ENCODE measurements at regions of chr2 and their contacts with region 1.

Region 1: DNA sequence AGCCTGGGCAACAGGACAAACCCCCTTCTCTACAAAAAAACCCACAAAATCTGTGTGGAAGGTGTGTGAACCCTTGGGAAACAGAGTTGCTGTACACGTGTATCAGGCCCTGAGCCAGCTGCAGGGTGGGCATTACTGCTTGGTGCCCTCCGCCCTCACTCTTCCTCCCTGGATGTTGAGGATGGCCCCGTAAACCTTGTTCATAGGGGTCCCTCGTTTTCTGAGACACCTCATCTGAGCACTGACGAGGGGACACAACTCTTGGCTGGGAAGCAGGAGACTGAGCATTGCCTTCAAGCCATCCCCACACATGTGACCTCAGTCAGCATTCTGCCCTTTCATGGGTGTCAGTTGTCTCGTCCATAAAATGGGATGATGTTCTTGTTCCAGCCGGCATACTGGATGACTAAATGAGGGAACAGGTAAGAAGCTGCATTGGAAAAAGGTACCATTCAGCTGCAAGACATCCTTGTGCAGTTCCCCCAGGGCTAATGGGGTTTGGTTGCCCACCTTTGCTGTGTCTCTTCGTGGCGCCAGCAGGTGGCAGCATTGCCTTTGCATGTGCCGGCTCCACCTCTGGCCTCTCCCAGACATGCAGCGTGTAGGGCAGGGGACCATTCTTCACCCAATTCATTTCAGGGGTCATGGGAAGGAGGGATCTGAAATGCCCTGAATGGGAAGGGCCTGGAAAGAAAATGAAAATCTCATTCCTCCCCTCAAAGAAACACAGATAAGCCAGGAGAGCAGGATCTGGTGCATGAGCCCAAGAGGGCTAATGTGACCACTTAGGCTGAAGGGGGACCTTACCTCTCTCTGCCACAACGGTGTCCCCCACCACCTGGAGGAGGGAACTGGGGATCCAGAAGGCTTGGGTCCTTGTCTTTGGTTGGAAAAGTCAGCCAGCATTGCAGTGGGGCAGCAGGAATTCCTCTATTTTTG is 36.4 kb upstream of the HAAO start:
- DNase-seq: peak; percentile 76
- H3K4me3 ChIP-seq: no peak overlapping the region
- H3K27ac ChIP-seq: no peak overlapping the region
- H3K4me1 ChIP-seq: no peaks in the 10 kb centered on the region
- CTCF ChIP-seq: peak; percentile 94

Region 2: DNA sequence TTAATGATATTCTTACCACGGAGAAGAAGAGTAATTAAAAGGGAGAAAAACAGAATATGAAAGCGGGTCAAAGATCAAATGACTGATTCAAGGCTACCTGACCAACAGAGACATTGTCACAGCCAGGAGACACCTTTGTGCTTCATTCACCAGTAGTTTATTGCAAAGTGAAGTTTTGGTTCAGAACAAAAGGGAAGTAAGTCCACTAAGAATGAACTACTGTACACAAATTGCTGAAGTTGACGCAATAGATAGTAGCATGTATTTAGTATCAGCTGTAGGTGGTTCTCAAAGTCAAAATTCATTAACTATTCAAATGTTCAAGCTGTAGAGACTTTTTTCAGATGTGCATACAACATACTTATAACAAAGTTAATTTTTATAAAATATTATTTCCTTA is 403.1 kb before region 1 on chr2:
- CTCF ChIA-PET with region 1: no interaction called
- POLR2A ChIA-PET with region 1: no interaction called
- intact Hi-C with region 1: no loop called
- DNase-seq: no peak
- H3K4me3 ChIP-seq: no peak overlapping the region
- H3K27ac ChIP-seq: no peak overlapping the region
- H3K4me1 ChIP-seq: no peaks in the 10 kb centered on the region
- CTCF ChIP-seq: no peak

Region 3: DNA sequence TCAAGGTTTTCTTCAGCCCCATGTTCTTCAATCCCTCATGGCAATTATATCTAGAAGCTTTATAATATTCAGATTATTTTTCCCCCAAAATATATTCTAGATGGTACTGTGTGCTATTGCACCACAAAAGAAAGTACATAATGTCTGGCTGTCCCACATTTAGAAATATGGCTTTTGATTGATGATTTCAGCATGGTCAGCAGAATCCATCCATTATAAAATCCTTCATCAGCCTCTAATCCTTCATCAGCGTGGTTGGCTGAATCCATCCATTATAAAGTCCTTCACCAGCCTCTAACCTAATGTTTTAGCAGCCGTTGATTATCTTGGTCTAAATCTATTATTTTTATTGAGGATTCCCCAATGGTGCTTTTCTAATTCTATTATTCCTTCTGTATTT is 13.0 kb before region 1 on chr2:
- CTCF ChIA-PET with region 1: no interaction called
- POLR2A ChIA-PET with region 1: no interaction called
- intact Hi-C with region 1: no loop called
- DNase-seq: no peak
- H3K4me3 ChIP-seq: no peak overlapping the region
- H3K27ac ChIP-seq: no peak overlapping the region
- H3K4me1 ChIP-seq: peaks cover 2% of the 10 kb centered on the region
- CTCF ChIP-seq: no peak

Region 4: DNA sequence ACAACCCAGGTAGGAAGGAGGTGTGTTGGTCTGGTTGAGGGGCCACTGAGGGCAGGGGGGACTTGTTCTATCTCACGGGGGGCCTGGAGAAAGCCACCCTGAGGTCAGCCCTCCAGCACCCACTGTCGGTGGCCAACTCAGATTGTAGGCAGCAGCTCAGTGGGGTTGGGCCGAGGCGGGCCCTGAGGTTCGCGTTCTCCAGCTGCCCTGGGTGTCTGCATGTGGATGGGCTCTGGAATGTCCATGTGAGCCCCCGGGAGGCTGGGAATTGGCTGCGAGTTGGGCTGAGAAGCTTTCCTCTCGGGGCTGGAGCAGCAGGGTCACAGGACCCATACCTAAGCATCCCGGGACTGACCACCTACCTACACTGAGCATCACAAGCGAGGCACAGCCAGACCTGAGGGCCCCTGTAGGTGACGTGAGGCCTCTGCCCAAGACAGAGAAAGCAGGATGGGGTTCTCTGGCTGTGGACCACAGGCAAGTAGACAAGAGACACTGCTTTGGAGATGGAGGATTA is 34.0 kb after region 1 on chr2:
- CTCF ChIA-PET with region 1: no interaction called
- POLR2A ChIA-PET with region 1: no interaction called
- intact Hi-C with region 1: loop called (anchors 1 kb)
- DNase-seq: no peak
- H3K4me3 ChIP-seq: no peak overlapping the region
- H3K27ac ChIP-seq: no peak overlapping the region
- H3K4me1 ChIP-seq: no peaks in the 10 kb centered on the region
- CTCF ChIP-seq: no peak

Region 5: DNA sequence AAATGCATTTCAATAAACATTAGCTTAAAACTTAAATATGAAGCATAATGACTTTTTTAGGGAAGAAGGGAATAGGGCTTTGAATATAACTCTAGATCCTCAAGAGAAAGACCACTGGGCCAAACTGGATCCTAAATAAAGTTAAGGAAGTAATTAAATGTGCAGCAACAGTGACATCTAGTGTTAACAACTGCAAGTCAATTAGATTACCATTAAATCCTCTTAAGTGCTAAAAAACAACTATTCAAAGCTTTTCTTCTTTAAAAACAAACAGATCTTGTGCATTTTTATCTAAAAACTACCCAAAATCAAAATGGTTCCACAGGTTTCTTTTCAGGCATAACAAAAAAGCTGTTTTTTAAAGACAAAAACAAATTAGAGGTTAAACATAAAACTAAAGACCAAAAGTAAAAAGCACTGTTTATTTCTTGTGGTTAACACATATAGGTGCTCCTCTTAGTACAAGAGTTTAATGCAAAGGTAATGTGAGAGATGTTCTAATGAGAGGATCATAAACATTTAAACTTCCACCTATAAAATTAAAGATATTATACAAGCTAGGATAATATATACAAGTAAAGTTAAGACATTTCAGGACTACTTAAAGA is 655.7 kb after region 1 on chr2:
- CTCF ChIA-PET with region 1: no interaction called
- POLR2A ChIA-PET with region 1: no interaction called
- intact Hi-C with region 1: loop called (anchors 5 kb)
- DNase-seq: peak; percentile 83
- H3K4me3 ChIP-seq: no peak overlapping the region
- H3K27ac ChIP-seq: no peak overlapping the region
- H3K4me1 ChIP-seq: no peaks in the 10 kb centered on the region
- CTCF ChIP-seq: peak; percentile 95

Region 6: GRCh38 chr2:43537137-43537536 is 708.4 kb after region 1 on chr2:
- CTCF ChIA-PET with region 1: no interaction called
- POLR2A ChIA-PET with region 1: no interaction called
- intact Hi-C with region 1: loop called (anchors 5 kb)
- DNase-seq: no peak
- H3K4me3 ChIP-seq: no peak overlapping the region
- H3K27ac ChIP-seq: no peak overlapping the region
- H3K4me1 ChIP-seq: no peaks in the 10 kb centered on the region
- CTCF ChIP-seq: no peak

Region 7: GRCh38 chr2:43611987-43612894 is 783.5 kb after region 1 on chr2:
- CTCF ChIA-PET with region 1: no interaction called
- POLR2A ChIA-PET with region 1: no interaction called
- intact Hi-C with region 1: loop called (anchors 2 kb)
- DNase-seq: peak; percentile 73
- H3K4me3 ChIP-seq: no peak overlapping the region
- H3K27ac ChIP-seq: no peak overlapping the region
- H3K4me1 ChIP-seq: no peaks in the 10 kb centered on the region
- CTCF ChIP-seq: peak; percentile 96